ENCODE measurements at regions of chr11 and their contacts with region 1.

Region 1: DNA sequence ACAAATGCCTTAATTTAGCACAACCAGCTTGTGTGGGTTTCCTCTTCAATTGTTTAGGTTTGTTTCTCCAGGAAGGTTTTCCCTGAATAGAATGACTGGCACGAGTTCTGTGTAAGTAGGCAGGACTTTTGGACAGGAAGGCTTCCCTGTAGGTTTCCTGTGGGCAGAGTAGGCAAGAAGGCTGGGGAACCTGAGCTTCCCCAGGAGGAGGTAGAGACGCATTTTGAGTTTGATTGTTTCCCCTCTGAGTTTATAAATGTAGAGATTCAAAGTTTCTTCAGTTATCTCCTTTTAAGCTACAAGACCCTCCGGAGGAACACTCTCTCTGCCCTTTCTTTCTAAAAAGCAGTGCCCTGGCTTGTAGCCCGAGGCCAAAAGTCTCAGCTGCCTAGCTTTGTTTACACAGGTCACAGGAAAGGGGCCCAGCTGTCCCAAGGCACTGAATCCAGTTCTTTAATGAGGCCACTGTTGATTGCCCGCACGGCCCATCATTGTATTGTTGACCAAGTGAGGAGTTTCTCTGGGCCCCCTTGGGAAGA is 66.6 kb upstream of the RDX start:
- DNase-seq: peak; percentile 95
- H3K4me3 ChIP-seq: peak overlapping the region in 1 of 3 experiments; percentile 2
- H3K27ac ChIP-seq: peak overlapping the region; percentile 85
- H3K4me1 ChIP-seq: peaks cover 28% of the 10 kb centered on the region
- H3K27me3 ChIP-seq: no peaks in the 10 kb centered on the region
- CTCF ChIP-seq: no peak
- POLR2A ChIP-seq: no peak

Region 2: GRCh38 chr11:110251837-110252236 is 111.2 kb before region 1 on chr11:
- CTCF ChIA-PET with region 1: interaction called, 19 read pairs
- POLR2A ChIA-PET with region 1: no interaction called
- dilution Hi-C with region 1: no loop called
- intact Hi-C with region 1: no loop called
- DNase-seq: peak; percentile 90
- H3K4me3 ChIP-seq: no peak overlapping the region
- H3K27ac ChIP-seq: peak overlapping the region; percentile 24
- H3K4me1 ChIP-seq: peaks cover 24% of the 10 kb centered on the region
- H3K27me3 ChIP-seq: no peaks in the 10 kb centered on the region
- CTCF ChIP-seq: no peak
- POLR2A ChIP-seq: no peak

Region 3: DNA sequence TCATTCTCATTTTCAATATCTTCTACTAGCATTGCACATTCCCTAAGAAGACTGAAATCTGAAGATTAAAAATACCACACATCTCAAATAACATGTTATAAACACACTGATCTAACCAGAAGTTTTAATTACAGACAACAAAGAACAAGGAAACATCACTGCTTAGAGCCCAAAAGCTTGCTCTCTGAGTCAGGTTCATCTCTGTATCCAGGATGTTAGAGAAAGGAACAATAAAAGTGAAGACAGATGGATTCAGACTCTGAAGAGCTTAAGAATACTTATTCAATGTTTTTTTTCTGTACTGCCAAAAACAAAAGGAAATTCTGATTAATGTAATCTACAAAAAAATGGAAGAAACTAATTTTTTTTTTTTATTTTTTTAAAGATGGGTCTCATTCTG is 83.2 kb before region 1 on chr11:
- CTCF ChIA-PET with region 1: interaction called, 10 read pairs
- POLR2A ChIA-PET with region 1: no interaction called
- dilution Hi-C with region 1: no loop called
- intact Hi-C with region 1: no loop called
- DNase-seq: peak; percentile 82
- H3K4me3 ChIP-seq: no peak overlapping the region
- H3K27ac ChIP-seq: peak overlapping the region; percentile 50
- H3K4me1 ChIP-seq: peaks cover 2% of the 10 kb centered on the region
- H3K27me3 ChIP-seq: no peaks in the 10 kb centered on the region
- CTCF ChIP-seq: no peak
- POLR2A ChIP-seq: no peak

Region 4: DNA sequence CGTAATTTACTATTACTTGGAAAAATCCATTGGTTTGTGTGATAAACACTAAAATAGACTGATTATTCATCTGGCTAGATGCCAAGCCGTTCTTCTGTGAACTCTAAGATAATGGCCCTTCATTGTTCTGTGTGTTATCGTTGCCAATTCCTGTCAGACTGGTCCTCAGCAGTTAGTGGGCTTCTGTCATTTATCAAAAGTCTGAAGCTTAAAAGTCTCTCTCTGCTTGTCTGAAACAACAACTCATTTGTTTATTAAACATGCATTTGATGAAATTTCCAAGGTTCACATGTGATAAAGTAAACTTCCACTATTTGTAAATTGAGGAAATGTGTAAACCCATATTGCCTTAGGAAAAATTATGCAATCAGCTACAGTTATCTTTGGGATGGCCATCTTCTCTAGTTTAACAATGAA is 45.5 kb before region 1 on chr11:
- CTCF ChIA-PET with region 1: interaction called, 12 read pairs
- POLR2A ChIA-PET with region 1: interaction called, 6 read pairs
- dilution Hi-C with region 1: no loop called
- intact Hi-C with region 1: loop called (anchors 1 kb)
- DNase-seq: peak; percentile 98
- H3K4me3 ChIP-seq: no peak overlapping the region
- H3K27ac ChIP-seq: peak overlapping the region; percentile 93
- H3K4me1 ChIP-seq: peaks cover 48% of the 10 kb centered on the region
- H3K27me3 ChIP-seq: no peaks in the 10 kb centered on the region
- CTCF ChIP-seq: no peak
- POLR2A ChIP-seq: peak; percentile 55

Measured in endothelial cell of umbilical vein (primary cell).